T-cell (primary cell): ENCODE measurements at regions of chr3 and their contacts with region 1.

Region 1: GRCh38 chr3:53350652-53351051 is 3.3 kb upstream of the DCP1A start:
- DNase-seq: peak in 1 of 35 experiments; percentile 27
- ATAC-seq: no peak
- H3K4me3 ChIP-seq: no peak overlapping the region
- H3K4me3 Mint-ChIP-seq: no peak overlapping the region
- H3K27ac ChIP-seq: no peak overlapping the region
- H3K27ac Mint-ChIP-seq: no peak overlapping the region
- H3K4me1 ChIP-seq: peaks cover 9 to 14% of the 10 kb centered on the region in 2 experiments
- H3K4me1 Mint-ChIP-seq: peaks cover 13 to 32% (median 15%) of the 10 kb centered on the region in 3 donors
- H3K27me3 ChIP-seq: no peaks in the 10 kb centered on the region
- H3K27me3 Mint-ChIP-seq: no peaks in the 10 kb centered on the region

Region 2: DNA sequence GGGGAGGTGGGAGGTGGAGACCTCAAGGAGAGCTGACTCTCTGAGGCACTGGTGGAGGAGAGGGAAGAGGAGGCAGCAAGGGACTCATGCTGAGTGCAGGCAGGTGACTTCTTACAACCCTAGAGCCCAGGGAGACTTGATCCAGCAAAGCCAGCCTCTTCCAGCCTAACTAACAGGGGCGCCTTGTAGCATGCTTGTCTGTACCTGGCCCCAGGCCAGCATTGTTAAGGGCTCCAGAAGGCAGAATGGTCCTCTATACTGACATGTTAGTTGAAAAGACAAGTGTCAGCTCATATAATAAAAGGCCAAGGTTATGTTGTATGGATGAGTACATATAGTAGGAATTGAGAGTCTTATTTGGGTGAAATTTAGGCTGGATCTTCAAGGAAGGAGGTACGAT is 430.2 kb after region 1 on chr3:
- CTCF ChIA-PET with region 1: no interaction called
- POLR2A ChIA-PET with region 1: interaction called in 1 of 2 experiments, 16 read pairs
- DNase-seq: no peak
- ATAC-seq: no peak
- H3K4me3 ChIP-seq: no peak overlapping the region
- H3K4me3 Mint-ChIP-seq: no peak overlapping the region
- H3K27ac ChIP-seq: no peak overlapping the region
- H3K27ac Mint-ChIP-seq: no peak overlapping the region
- H3K4me1 ChIP-seq: no peaks in the 10 kb centered on the region
- H3K4me1 Mint-ChIP-seq: no peaks in the 10 kb centered on the region
- H3K27me3 ChIP-seq: peaks cover 0 to 16% of the 10 kb centered on the region in 2 experiments
- H3K27me3 Mint-ChIP-seq: peaks cover 0 to 4% of the 10 kb centered on the region in 2 donors